ENCODE measurements at regions of chr21 and their contacts with region 1.

Region 1: GRCh38 chr21:45439161-45439872 is 34.4 kb downstream of the COL18A1 start:
- DNase-seq: peak; percentile 40
- H3K4me3 ChIP-seq: 0 out of 2 replicates have a peak overlapping the region, but pooled peaks have one; percentile 12
- H3K27me3 ChIP-seq: no peaks in the 10 kb centered on the region
- CTCF ChIP-seq: peak; percentile 93

Region 2: GRCh38 chr21:45454060-45454925 is 15.0 kb after region 1 on chr21:
- CTCF ChIA-PET with region 1: interaction called, 18 read pairs
- POLR2A ChIA-PET with region 1: no interaction called
- DNase-seq: no peak
- H3K4me3 ChIP-seq: no peak overlapping the region
- H3K27me3 ChIP-seq: no peaks in the 10 kb centered on the region
- CTCF ChIP-seq: peak; percentile 9; the same call in 1 of the 2 replicates

Measured in BJ (cell line).